ENCODE measurements at regions of chr20 and their contacts with region 1.

Region 1: DNA sequence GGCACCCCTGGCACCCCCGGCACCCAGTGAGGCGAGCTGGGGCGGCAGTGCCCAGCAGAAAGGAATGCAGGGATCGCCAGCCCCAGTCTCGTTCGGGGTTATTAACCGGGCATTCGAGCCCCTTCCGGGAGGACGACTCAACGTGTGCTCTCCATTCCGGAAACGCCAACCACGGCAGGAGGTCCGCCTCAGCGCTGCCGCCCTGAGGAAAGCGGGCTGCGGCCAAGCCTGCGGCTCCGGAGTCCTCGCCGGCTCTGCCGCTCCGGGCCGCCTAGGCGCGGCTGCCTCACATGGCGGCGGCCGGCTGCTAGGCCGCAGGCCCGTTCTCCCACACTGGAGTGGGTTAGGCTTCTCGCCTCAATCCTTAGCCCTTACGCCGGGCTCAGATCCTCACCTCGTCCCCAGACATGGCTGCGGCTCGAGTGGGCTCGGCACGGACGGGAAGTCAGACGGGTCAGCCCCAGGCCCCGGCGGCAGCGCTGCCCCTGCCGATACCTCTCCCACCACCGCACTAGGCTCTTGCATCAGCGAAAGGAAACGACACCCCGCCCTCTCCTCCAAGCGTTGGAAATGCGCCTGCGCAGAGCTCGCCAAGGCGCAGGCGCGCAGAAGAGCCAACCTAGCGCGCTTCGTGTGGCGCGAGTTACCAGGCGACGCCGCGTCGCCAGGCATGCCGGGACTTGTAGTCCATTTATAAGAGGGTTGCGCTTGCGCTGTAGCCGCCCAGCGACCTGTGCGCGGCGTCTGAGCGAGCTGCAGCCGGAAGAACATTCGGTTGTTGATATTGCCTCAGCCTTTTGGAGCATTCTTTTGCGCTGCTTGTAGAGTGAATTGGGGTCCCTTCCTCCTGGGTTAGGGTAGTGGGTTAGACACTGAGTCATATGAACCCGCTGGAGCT is at the start of gene EIF2S2:
- DNase-seq: peak; percentile 95 to 98 (median 97)
- ATAC-seq: peak; percentile 97 to 98 (median 98)
- H3K4me3 ChIP-seq: peak within 1 kb of the TSS; percentile 63 to 99 (median 86)
- H3K27ac ChIP-seq: peak within 1 kb of the TSS; percentile 64 to 98 (median 96)
- H3K4me1 ChIP-seq: peaks cover 3 to 50% (median 30%) of the 10 kb centered on the region in 12 donors
- H3K27me3 ChIP-seq: no peaks in the 10 kb centered on the region
- CTCF ChIP-seq: no peak
- POLR2A ChIP-seq: peak; percentile 68 to 96
- total RNA-seq, gene EIF2S2: 35.5 to 53.8 (median 40.9) TPM

Region 2: GRCh38 chr20:33810885-33811777 is 300.8 kb before region 1 on chr20 and contains the start of gene CHMP4B:
- intact Hi-C with region 1: loop called in 1 of 10 experiments (anchors 1 kb)
- DNase-seq: peak; percentile 99 to 100 (median 99)
- ATAC-seq: peak; percentile 97 to 99 (median 98)
- H3K4me3 ChIP-seq: peak within 1 kb of the TSS; percentile 75 to 99 (median 91)
- H3K27ac ChIP-seq: peak within 1 kb of the TSS; percentile 76 to 98 (median 94)
- H3K4me1 ChIP-seq: peaks cover 4 to 49% (median 36%) of the 10 kb centered on the region in 12 donors
- H3K27me3 ChIP-seq: no peaks in the 10 kb centered on the region
- CTCF ChIP-seq: no peak
- POLR2A ChIP-seq: peak in 1 of 2 donors; percentile 90
- total RNA-seq, gene CHMP4B: 46.2 to 225 (median 106) TPM

Region 3: GRCh38 chr20:34022154-34022838 is 89.7 kb before region 1 on chr20:
- intact Hi-C with region 1: no loop called
- DNase-seq: no peak
- ATAC-seq: no peak
- H3K4me3 ChIP-seq: no peak overlapping the region
- H3K27ac ChIP-seq: no peak overlapping the region
- H3K4me1 ChIP-seq: peaks cover 0 to 76% (median 58%) of the 10 kb centered on the region in 12 donors
- H3K27me3 ChIP-seq: no peaks in the 10 kb centered on the region
- CTCF ChIP-seq: peak in 2 of 12 donors; percentile 9 to 11
- POLR2A ChIP-seq: no peak

Region 4: DNA sequence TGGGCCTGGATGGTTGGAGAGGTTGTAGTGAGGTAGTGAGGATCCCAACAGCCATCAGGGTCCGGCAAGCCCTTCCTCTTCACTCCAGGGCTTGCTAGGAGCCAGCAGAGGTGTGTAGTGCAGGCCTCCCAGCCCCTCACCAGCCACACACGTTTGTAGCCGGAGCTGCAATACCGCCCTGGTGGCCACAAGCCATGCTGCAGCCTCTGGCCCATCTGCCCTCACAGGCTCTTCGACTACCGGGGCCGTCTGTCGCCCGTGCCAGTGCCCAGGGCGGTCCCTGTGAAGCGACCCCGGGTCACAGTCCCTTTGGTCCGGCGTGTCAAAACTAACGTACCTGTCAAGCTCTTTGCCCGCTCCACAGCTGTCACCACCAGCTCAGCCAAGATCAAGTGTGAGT is 36.3 kb before region 1 on chr20:
- intact Hi-C with region 1: loop called in 1 of 10 experiments (anchors 5 kb)
- DNase-seq: no peak
- ATAC-seq: no peak
- H3K4me3 ChIP-seq: no peak overlapping the region
- H3K27ac ChIP-seq: no peak overlapping the region
- H3K4me1 ChIP-seq: peaks cover 0 to 7% (median 0%) of the 10 kb centered on the region in 12 donors
- H3K27me3 ChIP-seq: no peaks in the 10 kb centered on the region
- CTCF ChIP-seq: peak in 2 of 12 donors; percentile 17 to 19
- POLR2A ChIP-seq: no peak